Naive thymus-derived CD4-positive, alpha-beta T cell (primary cell): ENCODE measurements at regions of chr1 and their contacts with region 1.

Region 1: DNA sequence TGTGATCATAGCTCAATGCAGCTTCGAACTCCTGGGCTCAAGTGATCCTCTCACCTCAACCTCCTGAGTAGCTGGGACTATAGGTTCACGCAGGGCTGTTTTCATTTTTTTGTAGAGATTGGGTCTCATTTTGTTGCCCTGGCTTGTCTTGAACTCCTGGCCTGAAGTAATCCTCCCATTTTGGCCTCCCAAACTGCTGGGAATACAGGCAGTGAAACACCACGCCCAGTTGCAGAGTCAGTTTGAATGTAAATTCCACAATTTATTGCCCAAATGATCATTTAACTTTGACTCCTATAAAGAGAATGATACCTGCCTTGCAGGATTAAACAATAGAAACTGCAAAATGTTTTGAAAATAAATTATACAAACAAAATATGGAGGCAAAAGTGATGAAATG is 10.7 kb downstream of the GOLPH3L start:
- DNase-seq: no peak
- ATAC-seq: no peak
- H3K4me3 ChIP-seq: no peak overlapping the region
- H3K4me3 Mint-ChIP-seq: no peak overlapping the region
- H3K27ac ChIP-seq: no peak overlapping the region
- H3K27ac Mint-ChIP-seq: peak overlapping the region in 2 of 9 donors; percentile 18 to 65
- H3K4me1 ChIP-seq: peaks cover 4 to 10% of the 10 kb centered on the region in 2 donors
- H3K4me1 Mint-ChIP-seq: peaks cover 10 to 34% (median 22%) of the 10 kb centered on the region in 7 donors
- H3K27me3 ChIP-seq: no peaks in the 10 kb centered on the region
- H3K27me3 Mint-ChIP-seq: no peaks in the 10 kb centered on the region

Region 2: DNA sequence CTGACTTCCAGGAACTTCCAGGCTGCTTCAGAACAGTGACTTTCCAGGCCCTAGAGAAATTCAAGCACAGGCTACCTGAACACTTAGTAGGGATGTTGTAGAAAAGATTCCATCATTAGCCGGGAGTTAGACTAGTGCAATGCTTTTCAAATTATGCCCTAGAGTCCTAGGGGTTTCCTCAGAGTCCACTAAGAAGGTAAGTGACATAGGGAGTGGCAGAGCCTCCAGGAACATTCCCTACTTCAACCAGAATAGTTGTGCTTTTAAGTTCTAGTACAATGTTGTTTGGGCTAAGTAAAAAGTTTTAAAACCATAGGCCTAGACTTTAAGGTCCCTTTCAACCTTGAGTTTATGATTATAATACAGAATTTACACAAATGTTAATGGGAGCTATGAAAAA is 19.8 kb after region 1 on chr1:
- CTCF ChIA-PET with region 1: no interaction called
- POLR2A ChIA-PET with region 1: interaction called, 10 read pairs
- intact Hi-C with region 1: no loop called
- DNase-seq: no peak
- ATAC-seq: no peak
- H3K4me3 ChIP-seq: no peak overlapping the region
- H3K4me3 Mint-ChIP-seq: no peak overlapping the region
- H3K27ac ChIP-seq: no peak overlapping the region
- H3K27ac Mint-ChIP-seq: no peak overlapping the region
- H3K4me1 ChIP-seq: no peaks in the 10 kb centered on the region
- H3K4me1 Mint-ChIP-seq: no peaks in the 10 kb centered on the region
- H3K27me3 ChIP-seq: no peaks in the 10 kb centered on the region
- H3K27me3 Mint-ChIP-seq: peaks cover 0 to 51% (median 0%) of the 10 kb centered on the region in 5 donors